Activated naive CD4-positive, alpha-beta T cell treated with anti-CD3 and anti-CD28 coated beads, Interleukin-2, amount 10 ng/mL, durations not matched to agents 7 days and 5 days (primary cell): ENCODE measurements at regions of chr2 and their contacts with region 1.

Region 1: DNA sequence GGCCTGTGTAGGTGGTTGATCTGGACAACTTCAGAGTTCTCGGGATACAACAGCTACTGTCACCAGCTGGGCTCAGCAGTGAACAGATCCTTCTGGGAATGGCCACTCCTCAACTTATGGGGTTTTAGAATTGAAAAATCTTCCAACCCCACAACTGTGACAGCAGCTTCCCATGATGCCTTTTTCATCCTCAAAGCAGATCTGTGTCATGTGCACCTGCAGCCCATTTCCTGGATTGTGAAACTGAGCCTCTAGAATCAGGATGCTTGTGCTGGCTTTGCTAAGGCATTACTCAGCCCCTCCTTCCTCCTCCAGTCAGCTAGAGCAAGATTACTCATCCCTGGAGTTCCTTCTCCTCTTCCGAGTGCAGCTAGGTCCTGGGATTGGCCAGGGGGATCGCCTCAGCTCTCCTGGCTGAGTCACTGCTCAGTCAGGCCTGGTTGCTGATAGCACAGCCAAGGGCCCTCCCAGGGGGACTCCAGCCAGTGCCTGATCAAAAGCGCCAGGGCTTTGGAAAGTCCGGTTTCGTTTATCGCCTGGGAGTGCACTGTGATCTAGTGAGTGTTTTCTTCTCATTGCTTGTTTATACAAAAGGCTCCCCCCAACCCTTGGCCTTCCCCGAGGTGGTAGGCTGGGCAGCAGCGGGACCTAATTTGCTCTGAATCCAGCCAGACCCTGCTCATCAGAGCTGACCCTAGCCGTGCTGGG is 2.4 kb upstream of the LPIN1 start:
- DNase-seq: peak; percentile 76
- H3K4me3 Mint-ChIP-seq: peak overlapping the region; percentile 48
- H3K27ac Mint-ChIP-seq: peak overlapping the region; percentile 75
- H3K4me1 Mint-ChIP-seq: peaks cover 51% of the 10 kb centered on the region
- H3K27me3 Mint-ChIP-seq: peaks cover 4% of the 10 kb centered on the region

Region 2: DNA sequence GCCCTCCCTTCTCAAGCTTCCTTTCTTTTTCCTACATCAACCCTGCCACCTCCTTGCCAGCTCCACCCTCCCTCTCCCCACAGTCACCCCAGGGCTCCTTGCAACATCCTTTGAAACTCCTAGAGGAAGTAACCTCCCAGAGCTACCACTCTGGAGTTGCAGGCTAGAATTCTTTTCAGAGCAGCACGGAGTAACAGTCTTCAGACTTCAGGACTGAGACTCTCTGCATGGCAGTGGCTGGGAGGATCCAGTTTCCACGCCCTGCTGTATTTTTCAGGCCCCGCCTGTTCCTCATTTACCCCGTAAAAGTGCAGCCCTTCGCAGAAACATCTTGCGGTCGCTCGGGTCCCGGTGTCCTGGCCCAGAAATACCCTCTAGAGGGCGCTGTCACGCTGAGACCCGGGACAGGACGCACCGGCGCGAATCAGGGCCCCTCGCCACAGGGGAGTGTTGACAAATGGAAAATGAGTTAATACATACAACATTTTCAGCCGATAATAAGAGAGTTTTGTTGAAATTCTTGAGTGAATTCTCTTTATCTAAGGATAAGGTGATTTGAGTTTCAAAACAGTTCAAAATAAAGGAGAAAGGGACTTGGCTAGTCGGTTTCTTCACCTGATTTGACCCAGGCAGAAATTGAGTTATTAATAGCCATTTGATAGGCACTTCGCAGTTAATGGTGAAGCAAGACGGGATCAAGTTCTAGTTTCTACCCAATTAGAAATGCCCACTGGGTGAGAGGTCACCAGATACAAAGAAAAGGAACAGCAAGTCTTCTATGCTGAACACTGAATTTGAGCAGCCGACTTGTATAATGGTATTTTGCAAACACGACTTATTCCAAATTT is 55.6 kb before region 1 on chr2:
- CTCF ChIA-PET with region 1: interaction called, 10 read pairs
- DNase-seq: peak; percentile 89
- H3K4me3 Mint-ChIP-seq: peak overlapping the region; percentile 16
- H3K27ac Mint-ChIP-seq: peak overlapping the region; percentile 40
- H3K4me1 Mint-ChIP-seq: peaks cover 24% of the 10 kb centered on the region
- H3K27me3 Mint-ChIP-seq: peaks cover 49% of the 10 kb centered on the region

Region 3: GRCh38 chr2:11753886-11754699 is 10.1 kb after region 1 on chr2:
- CTCF ChIA-PET with region 1: interaction called, 22 read pairs
- DNase-seq: peak; percentile 71
- H3K4me3 Mint-ChIP-seq: peak overlapping the region; percentile 64
- H3K27ac Mint-ChIP-seq: peak overlapping the region; percentile 96
- H3K4me1 Mint-ChIP-seq: peaks cover 95% of the 10 kb centered on the region
- H3K27me3 Mint-ChIP-seq: no peaks in the 10 kb centered on the region

Region 4: GRCh38 chr2:11778923-11779757 is 35.1 kb after region 1 on chr2:
- CTCF ChIA-PET with region 1: interaction called, 285 read pairs
- DNase-seq: peak; percentile 89
- H3K4me3 Mint-ChIP-seq: peak overlapping the region; percentile 46
- H3K27ac Mint-ChIP-seq: peak overlapping the region; percentile 68
- H3K4me1 Mint-ChIP-seq: peaks cover 52% of the 10 kb centered on the region
- H3K27me3 Mint-ChIP-seq: no peaks in the 10 kb centered on the region

Region 5: GRCh38 chr2:11930211-11930761 is 186.3 kb after region 1 on chr2:
- CTCF ChIA-PET with region 1: no interaction called
- DNase-seq: no peak
- H3K4me3 Mint-ChIP-seq: no peak overlapping the region
- H3K27ac Mint-ChIP-seq: no peak overlapping the region
- H3K4me1 Mint-ChIP-seq: peaks cover 8% of the 10 kb centered on the region
- H3K27me3 Mint-ChIP-seq: peaks cover 4% of the 10 kb centered on the region